Gastrocnemius medialis (tissue), 4 donors: ENCODE measurements at regions of chr2 and their contacts with region 1.

Region 1: GRCh38 chr2:74833418-74834233 is at the start of gene HK2:
- DNase-seq: peak; percentile 78 to 79
- ATAC-seq: peak; percentile 73 to 74
- H3K4me3 ChIP-seq: peak within 1 kb of the TSS; percentile 78 to 91 (median 88)
- H3K27ac ChIP-seq: peak within 1 kb of the TSS; percentile 84 to 97 (median 90)
- H3K4me1 ChIP-seq: peaks cover 16 to 21% of the 10 kb centered on the region in 2 donors
- H3K27me3 ChIP-seq: peaks cover 0 to 8% (median 0%) of the 10 kb centered on the region in 3 donors
- CTCF ChIP-seq: no peak
- POLR2A ChIP-seq: peak; percentile 89 to 96
- total RNA-seq, gene HK2: 18.1 to 57.6 (median 42.1) TPM

Region 2: GRCh38 chr2:74421221-74421870 is 412.3 kb before region 1 on chr2 and contains the starts of genes C2orf81 and WDR54:
- in situ Hi-C with region 1: no loop called
- intact Hi-C with region 1: no loop called
- DNase-seq: peak; percentile 40 to 49
- ATAC-seq: peak; percentile 72 to 73
- H3K4me3 ChIP-seq: peak within 1 kb of the TSS; percentile 57 to 64 (median 58)
- H3K27ac ChIP-seq: peak within 1 kb of the TSS in 1 of 4 donors; percentile 38
- H3K4me1 ChIP-seq: peaks cover 5 to 9% of the 10 kb centered on the region in 2 donors
- H3K27me3 ChIP-seq: peaks cover 17 to 33% (median 24%) of the 10 kb centered on the region in 3 donors
- CTCF ChIP-seq: no peak
- POLR2A ChIP-seq: no peak
- total RNA-seq, gene C2orf81: 0.24 TPM in 1 of 4 donors, not detected in the others
- total RNA-seq, gene WDR54: 0.51 to 2.1 (median 1.4) TPM

Region 3: GRCh38 chr2:74529357-74530238 is 304.0 kb before region 1 on chr2 and contains the starts of genes AUP1 and HTRA2:
- in situ Hi-C with region 1: no loop called
- intact Hi-C with region 1: loop called (anchors 10 kb)
- DNase-seq: peak; percentile 98
- ATAC-seq: peak; percentile 91 to 94
- H3K4me3 ChIP-seq: peak within 1 kb of the TSS; percentile 80 to 100 (median 93)
- H3K27ac ChIP-seq: peak within 1 kb of the TSS; percentile 84 to 94 (median 89)
- H3K4me1 ChIP-seq: peaks cover 19 to 28% of the 10 kb centered on the region in 2 donors
- H3K27me3 ChIP-seq: no peaks in the 10 kb centered on the region
- CTCF ChIP-seq: no peak
- POLR2A ChIP-seq: peak; percentile 70 to 89
- total RNA-seq, gene AUP1: 112 to 148 (median 115) TPM
- total RNA-seq, gene HTRA2: 24.2 to 38.5 (median 29.4) TPM

Region 4: GRCh38 chr2:74715078-74715791 is 118.4 kb before region 1 on chr2:
- in situ Hi-C with region 1: no loop called
- intact Hi-C with region 1: loop called (anchors 5 kb)
- DNase-seq: peak; percentile 48 to 69
- ATAC-seq: peak; percentile 83 to 86
- H3K4me3 ChIP-seq: peak overlapping the region; percentile 56 to 63 (median 58)
- H3K27ac ChIP-seq: peak overlapping the region; percentile 62 to 80 (median 70)
- H3K4me1 ChIP-seq: peaks cover 17 to 24% of the 10 kb centered on the region in 2 donors
- H3K27me3 ChIP-seq: no peaks in the 10 kb centered on the region
- CTCF ChIP-seq: peak; percentile 57 to 88 (median 85)
- POLR2A ChIP-seq: peak in 1 of 2 donors; percentile 25

Region 5: DNA sequence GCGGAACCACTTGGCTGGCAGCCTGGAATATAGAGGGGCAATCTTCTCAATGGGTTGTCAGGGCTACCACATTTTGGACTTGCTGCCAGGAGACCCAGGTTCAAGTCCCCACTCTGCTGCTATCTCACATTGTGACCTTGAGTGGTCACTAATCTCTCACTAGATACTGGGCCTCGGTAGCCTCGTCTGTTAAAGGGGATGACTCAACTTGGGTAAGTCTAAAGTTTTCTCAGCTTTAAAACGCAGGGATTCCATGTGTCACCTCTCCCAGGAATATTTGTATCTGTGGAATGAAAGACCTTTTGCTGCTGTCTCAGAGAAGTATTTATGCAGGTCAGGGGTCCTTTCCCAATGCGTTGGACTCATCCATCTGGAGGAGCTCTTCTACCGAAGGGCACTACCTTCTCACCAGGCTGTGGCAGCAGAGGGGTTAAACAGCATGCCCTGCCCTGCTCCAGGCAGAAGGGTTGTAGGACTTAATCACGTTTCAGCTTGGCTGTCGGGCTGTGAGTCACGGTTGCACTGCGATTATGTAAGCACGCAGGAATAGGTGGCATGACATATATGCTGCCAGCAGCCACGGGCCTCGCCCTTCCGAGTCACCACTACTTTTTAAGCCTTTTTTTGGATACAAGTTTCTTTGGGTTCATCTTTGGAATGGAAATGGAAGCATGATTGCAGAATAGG is 93.1 kb before region 1 on chr2:
- in situ Hi-C with region 1: no loop called
- intact Hi-C with region 1: no loop called
- DNase-seq: peak; percentile 60 to 71
- ATAC-seq: peak; percentile 95 to 96
- H3K4me3 ChIP-seq: no peak overlapping the region
- H3K27ac ChIP-seq: peak overlapping the region in 2 of 4 donors; percentile 38 to 73
- H3K4me1 ChIP-seq: peaks cover 4 to 5% of the 10 kb centered on the region in 2 donors
- H3K27me3 ChIP-seq: no peaks in the 10 kb centered on the region
- CTCF ChIP-seq: no peak
- POLR2A ChIP-seq: no peak

Region 6: DNA sequence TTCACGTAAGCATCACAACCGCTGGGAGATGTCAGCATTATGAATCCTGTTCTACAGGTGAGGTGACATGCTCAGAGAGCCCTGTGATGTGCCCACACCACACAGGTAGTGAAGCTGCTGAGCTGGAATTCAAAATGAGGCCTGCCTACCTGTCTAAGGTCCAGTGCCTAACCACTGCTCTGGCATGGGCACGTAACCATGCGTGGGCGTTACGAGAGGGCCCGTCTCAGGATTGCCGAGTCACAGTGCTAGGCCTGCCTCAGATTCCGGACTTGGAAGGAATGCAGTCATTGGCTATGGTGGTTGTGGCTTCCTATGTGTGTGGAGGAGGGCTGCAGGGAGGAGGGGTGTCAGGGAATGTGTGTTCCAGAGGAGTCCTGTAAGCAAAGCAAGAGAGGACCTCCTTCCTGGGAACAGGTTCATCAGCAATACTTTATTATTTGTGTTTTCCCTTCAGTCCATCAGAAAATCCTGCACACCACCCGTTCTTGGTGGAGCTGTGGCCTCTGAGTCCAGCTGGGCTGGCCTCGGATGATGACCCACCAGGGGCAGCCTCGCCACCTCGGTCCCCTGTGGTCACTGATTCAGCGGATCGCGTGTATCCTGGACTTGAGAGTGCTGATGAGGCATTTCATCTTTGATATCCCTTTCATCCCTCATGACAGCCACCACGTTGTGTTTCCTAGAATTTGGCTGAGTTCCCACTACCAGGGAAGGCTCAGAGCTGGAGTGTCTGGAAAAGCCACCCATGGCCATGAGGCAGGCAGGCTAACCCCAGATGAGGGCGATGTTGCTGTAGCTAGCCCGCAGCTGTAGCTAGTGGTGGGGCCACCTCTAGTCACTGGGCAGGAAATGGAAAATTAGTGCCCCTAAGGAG is 31.5 kb after region 1 on chr2:
- in situ Hi-C with region 1: no loop called
- intact Hi-C with region 1: loop called (anchors 2 kb)
- DNase-seq: peak; percentile 33 to 59
- ATAC-seq: peak; percentile 26 to 39
- H3K4me3 ChIP-seq: no peak overlapping the region
- H3K27ac ChIP-seq: peak overlapping the region; percentile 75 to 92 (median 88)
- H3K4me1 ChIP-seq: peaks cover 37 to 84% of the 10 kb centered on the region in 2 donors
- H3K27me3 ChIP-seq: no peaks in the 10 kb centered on the region
- CTCF ChIP-seq: no peak
- POLR2A ChIP-seq: peak in 1 of 2 donors; percentile 38

Region 7: DNA sequence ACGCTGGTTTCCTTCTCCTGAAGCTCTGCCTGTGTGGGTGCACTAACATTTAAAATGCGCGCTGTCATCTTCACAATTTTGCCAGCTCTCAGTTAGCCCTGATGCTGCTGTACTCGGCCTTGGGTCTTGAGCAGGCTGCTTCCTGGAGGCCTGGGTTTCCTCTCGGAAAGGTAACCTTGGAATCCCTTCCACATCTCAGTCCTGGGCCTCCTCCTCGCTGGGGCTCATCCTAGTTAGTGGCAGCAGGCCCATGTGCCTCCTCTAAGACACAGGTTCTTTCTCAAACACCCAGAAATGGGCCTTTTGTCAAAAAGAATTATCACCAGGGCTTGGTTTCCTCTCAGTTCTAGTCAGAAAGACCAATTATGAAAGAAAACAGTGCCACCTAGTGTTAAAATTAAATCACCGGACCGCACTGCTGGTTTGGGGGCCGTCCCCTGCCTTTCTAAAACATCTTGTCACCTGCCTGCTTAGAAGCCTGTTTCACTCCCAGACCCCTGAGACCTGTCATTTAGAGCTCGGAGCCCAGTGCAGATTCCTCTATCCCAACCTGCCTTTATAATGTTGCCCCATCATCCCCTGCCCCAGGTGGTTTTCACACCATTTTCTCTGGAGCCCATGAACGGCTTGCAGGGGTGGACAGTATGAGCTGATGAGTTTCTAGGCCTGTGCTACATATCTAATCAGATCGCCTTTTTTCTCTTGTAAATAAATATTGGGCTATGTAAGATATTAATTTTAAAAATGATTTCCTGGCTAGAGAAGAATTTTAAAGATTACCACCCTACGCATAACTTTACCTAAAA is 42.7 kb after region 1 on chr2:
- in situ Hi-C with region 1: no loop called
- intact Hi-C with region 1: loop called (anchors 2 kb)
- DNase-seq: peak in 1 of 2 donors; percentile 29
- ATAC-seq: peak; percentile 65 to 74
- H3K4me3 ChIP-seq: no peak overlapping the region
- H3K27ac ChIP-seq: peak overlapping the region; percentile 41 to 73 (median 62)
- H3K4me1 ChIP-seq: peaks cover 0 to 28% of the 10 kb centered on the region in 2 donors
- H3K27me3 ChIP-seq: no peaks in the 10 kb centered on the region
- CTCF ChIP-seq: peak; percentile 49 to 78 (median 77)
- POLR2A ChIP-seq: no peak

Region 8: DNA sequence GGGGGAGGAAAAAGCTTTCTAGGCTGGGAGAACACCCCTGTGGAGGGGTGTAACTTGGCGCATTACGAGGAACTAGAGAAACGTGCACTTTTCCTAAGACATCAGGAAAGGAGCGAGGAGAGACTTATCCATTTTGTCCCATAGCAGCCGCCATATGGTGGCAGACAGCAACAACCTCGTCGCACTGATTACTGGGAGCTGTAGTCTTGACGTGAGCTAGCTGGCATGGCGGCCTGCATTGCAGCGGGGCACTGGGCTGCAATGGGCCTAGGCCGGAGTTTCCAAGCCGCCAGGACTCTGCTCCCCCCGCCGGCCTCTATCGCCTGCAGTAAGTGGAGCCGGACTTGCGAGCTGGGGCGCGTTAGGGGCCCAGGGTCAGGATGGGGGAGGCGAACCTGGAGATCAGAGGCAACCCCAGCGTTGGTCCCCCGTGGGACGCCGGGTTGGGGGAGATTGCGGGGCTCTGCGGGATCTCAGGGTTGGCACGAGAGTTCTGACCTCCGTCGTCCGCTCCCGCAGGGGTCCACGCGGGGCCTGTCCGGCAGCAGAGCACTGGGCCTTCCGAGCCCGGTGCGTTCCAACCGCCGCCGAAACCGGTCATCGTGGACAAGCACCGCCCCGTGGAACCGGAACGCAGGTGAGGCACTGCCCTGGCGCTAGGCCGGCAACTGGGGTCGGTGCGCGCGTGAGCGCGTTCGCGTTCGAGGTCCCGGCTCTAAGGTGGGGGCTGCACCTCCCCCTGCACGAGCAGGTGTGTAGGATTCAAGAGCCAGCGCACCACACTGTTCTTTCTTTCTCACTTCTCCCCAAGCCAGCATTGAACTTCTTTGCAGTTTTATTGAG is 813.2 kb after region 1 on chr2 and contains the start of gene MRPL19:
- in situ Hi-C with region 1: no loop called
- intact Hi-C with region 1: loop called (anchors 10 kb)
- DNase-seq: peak; percentile 84 to 86
- ATAC-seq: peak; percentile 76 to 84
- H3K4me3 ChIP-seq: peak within 1 kb of the TSS; percentile 80 to 98 (median 92)
- H3K27ac ChIP-seq: peak within 1 kb of the TSS; percentile 87 to 92 (median 88)
- H3K4me1 ChIP-seq: peaks cover 59 to 61% of the 10 kb centered on the region in 2 donors
- H3K27me3 ChIP-seq: no peaks in the 10 kb centered on the region
- CTCF ChIP-seq: peak in 1 of 5 experiments; percentile 15
- POLR2A ChIP-seq: peak; percentile 47 to 58
- total RNA-seq, gene MRPL19: 25.4 to 95.3 (median 69.8) TPM